Prostate gland (tissue), 2 donors: ENCODE measurements at regions of chr12 and their contacts with region 1.

Region 1: DNA sequence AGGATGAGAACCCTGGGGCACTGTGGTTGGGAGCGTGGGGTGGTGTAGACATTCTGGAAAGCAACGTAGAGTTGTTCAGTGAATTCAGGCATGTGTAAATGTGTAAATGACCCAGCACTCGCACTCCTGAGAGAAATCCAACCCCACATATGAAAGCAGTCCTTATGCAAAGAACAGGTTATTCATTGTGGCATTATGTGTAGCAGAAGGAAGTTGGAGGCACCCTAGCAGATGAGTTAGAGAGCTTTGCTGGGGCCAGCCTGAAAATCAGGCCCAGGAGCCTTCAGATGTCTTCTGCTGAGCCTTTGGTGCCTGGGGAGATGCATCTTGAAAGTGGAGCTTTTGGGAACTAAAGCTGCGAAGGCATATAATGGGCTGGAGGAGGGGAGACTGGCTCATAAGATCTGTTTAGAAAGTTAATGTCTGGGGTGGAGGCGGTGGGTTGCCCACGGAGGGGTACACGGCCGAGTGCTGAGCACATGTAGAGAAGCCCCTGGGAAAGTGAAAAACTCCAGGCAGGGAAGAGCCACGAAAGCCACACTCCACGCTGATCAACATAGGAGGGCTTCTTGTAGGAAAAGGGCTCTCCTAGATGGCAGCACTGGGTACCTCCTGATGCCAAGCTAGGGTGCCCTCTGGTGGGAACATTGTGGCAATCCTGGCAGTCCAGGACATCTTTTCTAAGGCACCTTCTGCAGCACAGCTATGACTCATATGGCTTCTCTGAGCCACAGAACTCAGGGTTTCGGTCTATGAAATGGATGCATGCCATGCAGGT is 6.0 kb upstream of the KRT83 start:
- DNase-seq: peak; percentile 86
- H3K4me3 ChIP-seq: no peak overlapping the region
- H3K27ac ChIP-seq: no peak overlapping the region
- H3K4me1 ChIP-seq: no peaks in the 10 kb centered on the region
- H3K27me3 ChIP-seq: no peaks in the 10 kb centered on the region
- CTCF ChIP-seq: peak; percentile 59 to 94 (median 88)
- POLR2A ChIP-seq: no peak

Region 2: GRCh38 chr12:52215587-52216048 is 111.6 kb before region 1 on chr12:
- intact Hi-C with region 1: loop called (anchors 5 kb)
- DNase-seq: no peak
- H3K4me3 ChIP-seq: no peak overlapping the region
- H3K27ac ChIP-seq: peak overlapping the region in 1 of 2 donors; percentile 31
- H3K4me1 ChIP-seq: peaks cover 13% of the 10 kb centered on the region
- H3K27me3 ChIP-seq: no peaks in the 10 kb centered on the region
- CTCF ChIP-seq: no peak
- POLR2A ChIP-seq: no peak

Region 3: DNA sequence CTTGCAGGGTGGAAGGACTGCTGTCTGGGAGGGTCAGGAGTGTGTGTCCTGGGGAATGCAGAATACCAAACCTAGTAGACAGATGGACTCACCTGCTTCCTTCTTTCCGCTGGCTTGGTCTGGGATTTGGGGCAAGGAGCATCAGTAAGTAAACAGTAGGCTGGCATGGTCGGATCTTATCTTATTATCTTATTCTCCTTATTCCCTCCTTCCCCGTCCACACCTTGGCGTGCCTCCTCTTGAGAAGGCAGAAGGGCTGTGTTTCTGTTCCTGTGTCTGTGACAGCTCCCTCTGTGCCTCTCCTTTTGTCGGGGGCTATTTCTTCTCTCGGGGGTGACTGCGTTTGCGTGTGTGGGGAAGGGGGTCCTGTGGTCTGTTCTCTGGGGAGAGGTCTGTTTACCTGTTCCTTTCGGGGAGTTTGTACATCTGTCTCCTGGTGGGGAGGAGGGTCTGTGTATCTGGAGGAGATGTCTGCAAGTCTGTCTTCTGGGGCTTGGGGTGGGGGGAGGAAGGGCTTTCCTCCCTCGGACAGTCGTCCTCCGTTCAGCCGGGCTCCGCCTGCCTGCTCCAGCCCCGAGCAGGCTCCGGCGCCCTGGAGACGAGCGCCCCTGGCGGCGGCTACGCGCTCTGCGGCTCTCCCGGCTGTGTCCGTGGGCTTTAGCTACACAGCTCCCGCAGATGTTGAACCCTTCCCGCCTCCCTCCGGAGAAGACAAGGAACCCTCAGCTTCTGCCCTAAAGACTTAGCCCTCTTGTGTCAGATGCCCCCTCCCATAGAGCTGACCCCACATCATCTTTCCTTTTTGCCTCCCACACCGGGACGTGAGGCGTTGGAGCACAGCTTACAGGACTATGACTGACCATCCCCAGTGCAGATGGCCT is 48.5 kb before region 1 on chr12:
- intact Hi-C with region 1: loop called (anchors 5 kb)
- DNase-seq: peak; percentile 79
- H3K4me3 ChIP-seq: peak overlapping the region in 1 of 2 donors; percentile 21
- H3K27ac ChIP-seq: peak overlapping the region; percentile 78 to 82
- H3K4me1 ChIP-seq: peaks cover 5% of the 10 kb centered on the region
- H3K27me3 ChIP-seq: no peaks in the 10 kb centered on the region
- CTCF ChIP-seq: peak; percentile 90 to 98 (median 93)
- POLR2A ChIP-seq: peak; percentile 30